Activated CD4-positive, alpha-beta memory T cell treated with anti-CD3 and anti-CD28 coated beads, Interleukin-2, amount 10 ng/mL, durations not matched to agents 7 days and 5 days (primary cell): ENCODE measurements at regions of chr11 and their contacts with region 1.

Region 1: DNA sequence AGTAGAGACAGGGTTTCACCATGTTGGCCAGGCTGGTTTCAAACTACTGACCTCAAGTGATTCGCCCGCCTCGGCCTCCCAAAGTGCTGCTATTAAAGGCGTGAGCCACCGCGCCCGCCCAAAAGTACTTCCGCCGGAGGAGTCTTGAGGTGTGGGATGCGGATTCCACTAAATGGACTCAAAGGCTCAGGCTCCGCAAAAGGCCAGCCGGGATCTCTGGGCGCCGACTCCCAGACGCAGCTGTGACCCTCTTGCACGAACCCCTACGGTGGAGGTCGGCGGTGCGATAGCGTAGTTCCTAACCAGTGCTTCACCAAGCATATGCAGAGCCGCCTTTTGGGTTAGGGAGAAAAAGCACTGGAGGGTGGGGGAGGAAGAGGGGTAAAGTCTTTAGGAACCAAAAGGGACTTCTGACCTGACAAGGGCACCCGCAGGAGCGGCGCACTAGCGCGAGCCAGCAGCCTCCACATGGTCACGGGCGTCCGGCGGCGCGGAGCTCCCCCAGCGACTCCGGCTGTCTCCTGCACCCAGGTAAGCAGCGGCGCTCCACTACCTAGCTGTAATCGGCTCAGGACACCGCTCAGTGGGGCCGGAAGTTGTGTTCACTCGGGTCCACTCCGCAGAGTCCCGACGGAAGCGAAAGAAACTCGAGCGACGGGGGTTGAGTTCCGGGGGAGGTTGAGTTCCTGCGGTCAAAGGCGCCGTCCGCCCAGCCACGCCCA is at the start of gene MRPL16:
- DNase-seq: peak; percentile 93
- H3K4me3 Mint-ChIP-seq: peak within 1 kb of the TSS; percentile 90
- H3K27ac Mint-ChIP-seq: peak within 1 kb of the TSS; percentile 91
- H3K4me1 Mint-ChIP-seq: peaks cover 48% of the 10 kb centered on the region
- H3K27me3 Mint-ChIP-seq: no peaks in the 10 kb centered on the region
- total RNA-seq, gene MRPL16: 77.0 to 77.7 TPM

Region 2: DNA sequence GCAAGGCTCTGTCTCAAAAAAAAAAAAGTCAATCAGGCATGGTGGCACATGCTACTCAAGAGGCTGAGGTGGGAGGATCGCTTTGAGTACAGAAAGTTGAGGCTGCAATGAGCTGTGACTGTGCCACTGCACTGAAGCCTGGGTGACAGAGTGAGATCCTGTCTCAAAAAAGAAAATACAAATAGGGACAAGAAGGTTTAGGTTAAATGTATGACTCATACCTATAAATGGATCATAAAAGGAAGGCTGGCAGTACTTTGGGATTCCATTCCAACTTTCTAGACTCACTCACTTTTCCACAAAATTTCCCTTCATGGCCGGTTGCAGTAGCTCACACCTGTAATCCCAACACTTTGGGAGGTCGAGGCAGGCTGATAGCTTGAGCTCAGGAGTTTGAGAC is 169.2 kb before region 1 on chr11:
- CTCF ChIA-PET with region 1: no interaction called
- POLR2A ChIA-PET with region 1: no interaction called
- DNase-seq: no peak
- H3K4me3 Mint-ChIP-seq: no peak overlapping the region
- H3K27ac Mint-ChIP-seq: no peak overlapping the region
- H3K4me1 Mint-ChIP-seq: peaks cover 2% of the 10 kb centered on the region
- H3K27me3 Mint-ChIP-seq: no peaks in the 10 kb centered on the region

Region 3: GRCh38 chr11:59668950-59669610 is 141.3 kb before region 1 on chr11 and contains the start of gene PATL1:
- CTCF ChIA-PET with region 1: interaction called, 13 read pairs
- POLR2A ChIA-PET with region 1: interaction called, 6 read pairs
- DNase-seq: peak; percentile 99
- H3K4me3 Mint-ChIP-seq: peak within 1 kb of the TSS; percentile 95
- H3K27ac Mint-ChIP-seq: peak within 1 kb of the TSS; percentile 98
- H3K4me1 Mint-ChIP-seq: peaks cover 44% of the 10 kb centered on the region
- H3K27me3 Mint-ChIP-seq: no peaks in the 10 kb centered on the region
- total RNA-seq, gene PATL1: 56.4 to 56.8 TPM

Region 4: DNA sequence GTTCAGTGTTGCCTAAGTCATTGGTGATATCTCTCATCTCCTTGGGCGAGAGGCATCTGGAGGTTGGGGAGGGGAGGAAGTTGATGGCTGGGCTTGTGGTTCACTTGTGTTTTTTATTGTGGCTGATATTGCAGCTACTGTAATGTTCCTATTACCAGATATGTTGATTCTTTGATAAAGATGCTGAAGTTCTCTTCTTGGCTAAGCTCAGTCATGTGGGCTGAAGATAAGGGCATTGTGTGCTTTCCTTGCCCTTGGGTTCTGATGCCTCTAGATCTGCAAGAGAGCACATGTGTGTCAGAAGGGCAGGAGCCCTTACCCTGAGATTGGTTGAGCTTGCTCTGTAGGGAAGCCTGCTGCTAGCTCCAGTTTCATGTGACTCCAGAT is 43.1 kb before region 1 on chr11:
- CTCF ChIA-PET with region 1: interaction called, 4 read pairs
- POLR2A ChIA-PET with region 1: interaction called, 10 read pairs
- DNase-seq: peak; percentile 63
- H3K4me3 Mint-ChIP-seq: no peak overlapping the region
- H3K27ac Mint-ChIP-seq: no peak overlapping the region
- H3K4me1 Mint-ChIP-seq: peaks cover 35% of the 10 kb centered on the region
- H3K27me3 Mint-ChIP-seq: no peaks in the 10 kb centered on the region

Region 5: DNA sequence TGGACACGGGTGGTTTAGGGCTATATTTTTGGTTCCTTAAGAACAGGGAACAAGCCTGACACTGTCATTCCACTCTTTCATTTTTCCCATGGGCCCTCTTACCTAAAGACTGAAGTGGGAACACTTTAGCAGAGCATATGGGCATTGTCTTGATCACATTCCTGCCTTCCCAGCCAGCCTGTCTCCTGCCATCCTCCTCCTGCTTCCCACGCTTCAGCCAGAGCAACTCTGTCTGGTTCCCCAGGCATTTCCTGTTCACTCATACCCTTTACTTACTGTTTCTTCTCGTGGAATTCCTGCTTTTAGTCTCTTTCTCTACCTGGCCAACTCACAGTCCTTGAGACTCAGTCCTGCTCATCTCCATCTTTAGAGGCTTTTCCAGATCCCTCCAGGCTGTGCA is 22.5 kb before region 1 on chr11:
- CTCF ChIA-PET with region 1: interaction called, 3 read pairs
- POLR2A ChIA-PET with region 1: interaction called, 23 read pairs
- DNase-seq: no peak
- H3K4me3 Mint-ChIP-seq: no peak overlapping the region
- H3K27ac Mint-ChIP-seq: no peak overlapping the region
- H3K4me1 Mint-ChIP-seq: peaks cover 54% of the 10 kb centered on the region
- H3K27me3 Mint-ChIP-seq: no peaks in the 10 kb centered on the region

Region 6: GRCh38 chr11:59891781-59892181 is 81.4 kb after region 1 on chr11:
- CTCF ChIA-PET with region 1: no interaction called
- POLR2A ChIA-PET with region 1: no interaction called
- DNase-seq: no peak
- H3K4me3 Mint-ChIP-seq: no peak overlapping the region
- H3K27ac Mint-ChIP-seq: no peak overlapping the region
- H3K4me1 Mint-ChIP-seq: no peaks in the 10 kb centered on the region
- H3K27me3 Mint-ChIP-seq: peaks cover 14% of the 10 kb centered on the region